ENCODE measurements at regions of chr15 and their contacts with region 1.

Region 1: GRCh38 chr15:33149919-33150318 is 44.6 kb downstream of the FMN1 start:
- DNase-seq: no peak
- H3K4me3 ChIP-seq: no peak overlapping the region
- H3K4me3 Mint-ChIP-seq: no peak overlapping the region
- H3K27ac Mint-ChIP-seq: no peak overlapping the region
- H3K4me1 ChIP-seq: peaks cover 11% of the 10 kb centered on the region; the same call in 1 of the 2 replicates
- H3K4me1 Mint-ChIP-seq: peaks cover 16% of the 10 kb centered on the region
- H3K27me3 ChIP-seq: no peaks in the 10 kb centered on the region
- H3K27me3 Mint-ChIP-seq: peaks cover 8% of the 10 kb centered on the region
- CTCF ChIP-seq: no peak

Region 2: GRCh38 chr15:33111041-33111451 is 38.9 kb before region 1 on chr15:
- CTCF ChIA-PET with region 1: no interaction called
- POLR2A ChIA-PET with region 1: no interaction called
- intact Hi-C with region 1: no loop called
- DNase-seq: no peak
- H3K4me3 ChIP-seq: no peak overlapping the region
- H3K4me3 Mint-ChIP-seq: no peak overlapping the region
- H3K27ac Mint-ChIP-seq: no peak overlapping the region
- H3K4me1 ChIP-seq: no peaks in the 10 kb centered on the region
- H3K4me1 Mint-ChIP-seq: no peaks in the 10 kb centered on the region
- H3K27me3 ChIP-seq: no peaks in the 10 kb centered on the region
- H3K27me3 Mint-ChIP-seq: peaks cover 16% of the 10 kb centered on the region
- CTCF ChIP-seq: no peak

Region 3: GRCh38 chr15:33201491-33202231 is 51.7 kb after region 1 on chr15:
- CTCF ChIA-PET with region 1: interaction called, 3 read pairs
- POLR2A ChIA-PET with region 1: no interaction called
- intact Hi-C with region 1: loop called (anchors 5 kb)
- DNase-seq: peak; percentile 83 to 92
- H3K4me3 ChIP-seq: no peak overlapping the region
- H3K4me3 Mint-ChIP-seq: peak overlapping the region; percentile 11
- H3K27ac Mint-ChIP-seq: peak overlapping the region; percentile 93
- H3K4me1 ChIP-seq: peaks cover 47% of the 10 kb centered on the region
- H3K4me1 Mint-ChIP-seq: peaks cover 42% of the 10 kb centered on the region
- H3K27me3 ChIP-seq: no peaks in the 10 kb centered on the region
- H3K27me3 Mint-ChIP-seq: no peaks in the 10 kb centered on the region
- CTCF ChIP-seq: peak in 1 of 2 experiments; percentile 28

Measured in Caco-2 (cell line).